ENCODE measurements at regions of chr3 and their contacts with region 1.

Region 1: DNA sequence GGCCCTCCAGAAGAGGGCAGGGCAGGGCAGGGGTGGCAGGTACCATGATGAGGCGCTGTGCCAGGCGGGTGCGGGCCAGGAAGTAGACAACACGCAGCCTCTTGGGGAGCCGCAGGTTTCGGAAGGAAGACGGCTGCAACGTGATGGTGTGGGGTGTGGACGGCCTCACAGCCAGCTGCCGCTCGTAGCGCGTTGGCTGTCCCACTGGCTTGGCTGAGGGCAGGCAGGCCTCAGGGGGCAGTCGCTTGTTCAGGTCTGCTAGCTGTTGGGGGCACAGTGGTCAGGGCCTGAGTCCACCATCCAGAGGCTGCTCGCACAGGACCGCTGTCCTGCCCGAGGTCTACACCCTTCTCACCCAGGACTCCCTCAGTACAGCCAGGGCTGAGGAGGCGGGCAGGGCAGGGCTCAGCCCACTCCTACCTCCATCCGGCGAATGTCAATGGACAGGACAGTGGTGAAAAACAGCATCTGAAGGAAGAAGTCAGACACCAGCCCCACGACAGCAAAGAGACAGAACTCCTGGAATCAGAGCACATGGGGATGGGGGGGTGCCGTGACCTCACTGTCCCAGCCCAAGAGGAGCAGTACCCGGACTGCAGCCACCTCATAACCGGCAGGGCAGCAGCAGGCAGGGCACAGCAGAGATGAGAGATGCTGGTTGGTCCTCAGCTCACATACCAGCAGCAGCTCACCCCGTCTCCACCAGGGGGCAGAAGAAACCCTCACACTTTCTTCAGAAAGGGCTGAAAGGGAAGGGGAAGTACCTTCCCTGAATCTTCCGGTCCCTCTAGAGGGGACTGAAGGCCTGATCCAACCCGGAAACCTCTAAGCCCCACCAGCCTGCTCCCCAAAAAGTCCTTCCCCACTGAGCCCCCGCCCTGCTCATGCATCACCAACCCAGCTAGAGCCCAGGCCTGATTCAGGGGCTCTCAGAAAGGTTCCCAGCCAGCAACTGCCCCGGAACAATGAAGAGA is 40.0 kb downstream of the PTPN23 start:
- DNase-seq: peak; percentile 93
- H3K4me3 ChIP-seq: peak overlapping the region in 1 of 8 donors; percentile 44
- H3K27ac ChIP-seq: peak overlapping the region; percentile 75 to 87 (median 82)
- H3K4me1 ChIP-seq: peaks cover 12 to 43% (median 23%) of the 10 kb centered on the region in 6 donors
- H3K27me3 ChIP-seq: no peaks in the 10 kb centered on the region
- CTCF ChIP-seq: peak; percentile 85 to 98 (median 96)
- POLR2A ChIP-seq: no peak

Region 2: DNA sequence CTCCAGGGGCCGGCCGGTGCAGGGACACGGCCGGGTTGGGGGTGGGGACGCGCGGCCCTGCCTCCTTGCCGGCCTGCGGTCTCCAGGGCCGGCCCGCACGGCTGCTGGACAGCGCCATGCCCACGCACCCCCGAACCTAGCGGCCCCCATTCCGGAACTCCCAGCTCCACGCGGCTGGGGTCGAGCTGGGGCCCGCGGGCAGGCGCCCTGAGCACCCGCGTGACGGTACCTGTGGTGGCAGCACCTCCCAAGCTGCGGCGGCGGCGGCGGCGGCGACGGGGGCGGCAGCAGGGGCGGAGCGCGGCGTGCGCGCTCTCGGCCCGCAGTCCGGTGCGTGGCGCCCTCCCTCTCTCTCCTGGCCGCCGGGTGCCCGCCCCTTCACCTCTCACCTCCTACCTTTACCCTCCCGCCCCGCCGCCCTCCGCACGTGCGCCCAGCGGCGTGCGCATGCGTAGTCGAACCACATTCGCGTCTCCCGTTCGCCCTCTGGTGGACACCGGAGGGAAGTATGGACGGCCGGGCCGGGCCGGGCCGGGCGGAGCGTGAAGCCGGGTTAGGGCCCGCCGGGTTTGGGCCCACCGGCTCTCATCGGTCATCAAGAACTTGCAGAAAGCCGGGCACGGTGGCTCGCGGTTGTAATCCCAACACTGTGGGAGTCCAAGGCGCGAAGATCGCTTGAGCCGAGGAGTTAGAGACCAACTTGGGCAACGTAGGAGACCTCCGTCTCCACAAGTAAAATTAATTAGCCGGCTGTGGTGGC is 55.0 kb after region 1 on chr3 and contains the start of gene SCAP:
- intact Hi-C with region 1: loop called (anchors 2 kb)
- DNase-seq: peak; percentile 97
- H3K4me3 ChIP-seq: peak within 1 kb of the TSS; percentile 68 to 99 (median 98)
- H3K27ac ChIP-seq: peak within 1 kb of the TSS; percentile 71 to 92 (median 87)
- H3K4me1 ChIP-seq: peaks cover 9 to 43% (median 36%) of the 10 kb centered on the region in 6 donors
- H3K27me3 ChIP-seq: no peaks in the 10 kb centered on the region
- CTCF ChIP-seq: peak; percentile 97 to 99 (median 98)
- POLR2A ChIP-seq: peak; percentile 7 to 76 (median 23)
- total RNA-seq, gene SCAP: 70.9 to 116 (median 97.8) TPM

Measured in spleen (tissue), 13 donors.